Aorta (tissue), 5 donors: ENCODE measurements at regions of chr2 and their contacts with region 1.

Region 1: DNA sequence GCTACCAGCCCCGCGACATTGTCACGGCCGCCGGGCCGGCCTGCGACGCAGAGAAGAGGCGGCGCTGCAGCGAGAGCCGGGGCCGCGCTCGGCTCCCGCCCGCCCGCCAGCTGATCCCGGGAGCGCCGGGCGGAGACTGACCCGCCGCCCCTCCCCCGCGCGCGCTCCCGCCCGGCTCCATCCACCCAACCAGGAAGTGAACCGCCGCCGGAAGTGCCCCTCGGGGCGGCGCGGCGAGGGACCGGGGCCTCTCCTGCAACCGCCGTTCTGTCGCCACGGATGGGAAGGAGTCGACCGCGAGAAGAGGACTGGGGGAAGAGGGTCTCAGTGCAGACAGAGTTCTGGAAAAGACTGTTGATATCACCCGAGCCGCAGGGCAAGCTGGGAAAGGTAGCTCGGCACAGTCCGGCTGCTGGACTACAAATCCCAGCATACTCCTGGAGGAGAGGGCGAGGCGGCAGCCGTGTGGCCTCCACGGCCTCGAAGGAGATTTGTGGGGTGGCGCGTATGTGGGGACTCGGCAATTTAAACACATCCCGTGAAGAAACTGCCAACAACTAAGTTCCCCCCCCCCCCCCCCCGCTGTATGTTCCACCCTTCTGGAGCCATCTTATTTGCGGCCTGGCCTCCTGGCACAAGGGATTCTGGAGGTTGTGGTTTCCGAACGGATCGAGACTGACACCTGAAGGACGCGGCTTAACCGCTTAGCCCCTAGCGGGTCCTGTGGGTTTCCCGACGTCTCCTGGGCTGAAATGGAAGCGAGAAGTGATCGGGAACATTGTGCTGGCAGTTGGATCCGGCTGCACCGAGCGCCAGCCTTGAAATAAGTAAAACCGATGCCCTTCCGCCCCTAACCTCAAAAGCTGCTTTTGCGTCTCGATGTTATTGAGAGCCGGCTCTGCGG is at the start of gene AAK1:
- DNase-seq: peak; percentile 94 to 97
- ATAC-seq: peak; percentile 95
- H3K4me3 ChIP-seq: peak within 1 kb of the TSS; percentile 88 to 95
- H3K27ac ChIP-seq: peak within 1 kb of the TSS; percentile 83 to 90
- H3K4me1 ChIP-seq: peaks cover 0 to 8% of the 10 kb centered on the region in 2 donors
- H3K27me3 ChIP-seq: no peaks in the 10 kb centered on the region
- total RNA-seq, gene AAK1: 71.3 to 95.6 TPM

Region 2: DNA sequence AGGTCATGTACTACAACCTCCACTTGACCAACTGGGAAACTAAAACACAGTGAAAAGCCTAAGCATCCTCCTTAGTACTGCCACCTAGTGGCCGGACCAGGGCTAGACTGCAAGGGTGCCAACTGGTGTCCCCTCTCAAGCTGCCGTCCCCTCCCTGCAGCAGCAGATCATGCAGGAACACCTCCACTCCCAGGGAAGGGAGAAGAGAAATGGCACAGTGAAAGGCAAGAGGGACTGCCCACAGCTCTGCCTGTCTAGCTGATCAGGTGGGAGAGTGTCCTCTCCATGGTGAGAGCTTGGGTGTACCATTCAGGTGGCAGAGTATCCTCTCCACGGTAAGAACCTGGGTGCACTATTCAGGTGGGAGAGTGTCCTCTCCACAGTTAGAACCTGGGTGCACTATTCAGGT is 78.4 kb before region 1 on chr2:
- intact Hi-C with region 1: loop called (anchors 5 to 10 kb)
- DNase-seq: peak; percentile 65 to 83
- ATAC-seq: peak; percentile 81
- H3K4me3 ChIP-seq: no peak overlapping the region
- H3K27ac ChIP-seq: no peak overlapping the region
- H3K4me1 ChIP-seq: peaks cover 0 to 3% of the 10 kb centered on the region in 2 donors
- H3K27me3 ChIP-seq: no peaks in the 10 kb centered on the region

Region 3: GRCh38 chr2:69694894-69695849 is 51.3 kb after region 1 on chr2:
- intact Hi-C with region 1: loop called in 1 of 2 experiments (anchors 10 kb)
- DNase-seq: no peak
- ATAC-seq: no peak
- H3K4me3 ChIP-seq: no peak overlapping the region
- H3K27ac ChIP-seq: peak overlapping the region in 1 of 2 donors; percentile 38
- H3K4me1 ChIP-seq: peaks cover 0 to 2% of the 10 kb centered on the region in 2 donors
- H3K27me3 ChIP-seq: no peaks in the 10 kb centered on the region

Region 4: GRCh38 chr2:69863298-69863697 is 219.4 kb after region 1 on chr2:
- intact Hi-C with region 1: no loop called
- DNase-seq: no peak
- ATAC-seq: no peak
- H3K4me3 ChIP-seq: no peak overlapping the region
- H3K27ac ChIP-seq: no peak overlapping the region
- H3K4me1 ChIP-seq: no peaks in the 10 kb centered on the region
- H3K27me3 ChIP-seq: no peaks in the 10 kb centered on the region